Lower lobe of right lung (tissue), 2 donors: ENCODE measurements at regions of chr16 and their contacts with region 1.

Region 1: DNA sequence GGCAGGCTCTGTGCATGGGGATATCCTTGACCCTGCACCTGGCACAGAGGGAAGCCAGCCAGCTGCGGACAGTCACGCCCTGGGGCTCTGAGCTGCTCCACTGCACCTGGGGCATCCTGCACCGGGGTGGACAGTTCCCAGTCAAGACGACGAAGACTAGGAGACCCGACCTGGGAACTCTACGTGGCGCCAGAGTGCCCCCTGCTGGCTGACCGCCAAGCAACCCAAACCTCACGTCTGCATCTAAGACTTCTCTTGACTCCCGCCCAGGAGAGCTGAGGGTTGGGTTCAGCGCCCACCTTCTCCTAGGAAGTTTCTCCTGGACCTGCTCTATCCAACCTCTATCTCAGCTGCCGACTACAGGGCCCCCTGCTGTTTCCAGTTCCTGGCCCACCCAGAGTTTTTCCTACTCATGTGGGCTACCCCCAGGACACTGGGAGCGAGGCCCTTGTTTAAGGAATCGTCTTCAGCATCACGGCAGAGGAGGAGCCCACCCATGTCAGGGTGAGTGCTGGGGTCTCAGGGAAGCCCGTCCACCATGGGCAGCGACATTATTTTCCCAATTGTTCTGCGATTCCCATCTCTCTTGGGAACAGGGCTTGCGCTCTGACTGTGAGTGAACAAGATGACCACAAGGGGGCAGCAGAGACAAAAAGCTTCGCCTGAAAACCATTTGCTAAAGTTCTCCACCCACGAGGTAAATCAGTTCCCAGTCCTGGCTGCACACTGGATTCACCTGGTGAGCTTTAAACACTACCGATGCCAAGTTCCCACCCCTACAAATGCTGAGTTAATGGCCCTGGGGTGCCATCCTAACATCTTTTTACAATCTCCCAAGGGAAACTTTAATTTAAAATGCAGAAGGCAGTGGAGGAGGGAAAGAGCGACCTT is 29.3 kb downstream of the TLE7 start:
- DNase-seq: peak; percentile 53
- ATAC-seq: peak; percentile 80 to 90
- H3K4me3 ChIP-seq: no peak overlapping the region
- H3K27ac ChIP-seq: no peak overlapping the region
- H3K4me1 ChIP-seq: peaks cover 7% of the 10 kb centered on the region
- H3K27me3 ChIP-seq: peaks cover 26% of the 10 kb centered on the region
- CTCF ChIP-seq: peak; percentile 89

Region 2: DNA sequence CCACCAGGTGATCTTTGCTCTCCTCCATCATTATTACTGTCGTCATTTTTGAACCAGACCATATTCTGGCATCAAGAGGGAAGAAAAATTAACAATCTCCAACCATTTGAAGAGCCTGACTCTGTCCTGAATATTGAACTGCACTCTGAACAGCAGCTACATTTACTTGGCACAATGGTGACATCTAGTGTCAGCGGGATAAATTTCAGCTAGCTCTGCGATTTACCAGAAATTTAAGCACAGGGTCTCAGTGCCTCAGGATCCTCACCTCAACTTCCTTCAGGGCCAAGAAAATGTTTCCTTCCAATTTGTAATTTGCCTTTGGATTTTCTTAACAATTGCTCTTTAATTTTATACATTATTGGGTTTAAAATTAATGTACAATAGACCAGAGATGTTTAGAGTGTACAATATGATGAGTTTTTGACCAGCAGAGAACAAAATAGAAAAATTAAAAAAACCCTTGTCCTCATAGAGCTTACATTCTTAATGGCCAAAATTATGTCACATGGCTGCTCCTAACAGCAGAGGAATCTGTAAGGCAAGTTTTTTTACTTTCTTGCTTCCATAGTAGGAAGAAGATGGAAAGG is 87.4 kb after region 1 on chr16:
- intact Hi-C with region 1: loop called (anchors 10 kb)
- DNase-seq: no peak
- ATAC-seq: peak; percentile 54 to 58
- H3K4me3 ChIP-seq: no peak overlapping the region
- H3K27ac ChIP-seq: no peak overlapping the region
- H3K4me1 ChIP-seq: no peaks in the 10 kb centered on the region
- H3K27me3 ChIP-seq: no peaks in the 10 kb centered on the region
- CTCF ChIP-seq: peak; percentile 68

Region 3: GRCh38 chr16:71515026-71515425 is 102.5 kb after region 1 on chr16:
- intact Hi-C with region 1: no loop called
- DNase-seq: no peak
- ATAC-seq: no peak
- H3K4me3 ChIP-seq: no peak overlapping the region
- H3K27ac ChIP-seq: no peak overlapping the region
- H3K4me1 ChIP-seq: no peaks in the 10 kb centered on the region
- H3K27me3 ChIP-seq: no peaks in the 10 kb centered on the region
- CTCF ChIP-seq: no peak

Region 4: GRCh38 chr16:71537643-71538042 is 125.1 kb after region 1 on chr16:
- intact Hi-C with region 1: no loop called
- DNase-seq: no peak
- ATAC-seq: peak; percentile 54 to 78
- H3K4me3 ChIP-seq: no peak overlapping the region
- H3K27ac ChIP-seq: no peak overlapping the region
- H3K4me1 ChIP-seq: no peaks in the 10 kb centered on the region
- H3K27me3 ChIP-seq: no peaks in the 10 kb centered on the region
- CTCF ChIP-seq: peak; percentile 41